ENCODE measurements at regions of chr7 and their contacts with region 1.

Region 1: GRCh38 chr7:26398756-26399501 is 107.3 kb downstream of the SNX10 start:
- DNase-seq: peak; percentile 2
- ATAC-seq: peak; percentile 70
- H3K4me3 ChIP-seq: peak overlapping the region; percentile 36
- H3K27ac ChIP-seq: no peak overlapping the region
- H3K4me1 ChIP-seq: peaks cover 2% of the 10 kb centered on the region; the same call in 1 of the 2 replicates
- H3K27me3 ChIP-seq: peaks cover 23% of the 10 kb centered on the region
- CTCF ChIP-seq: no peak
- POLR2A ChIP-seq: no peak
- RAD21 ChIP-seq: no peak

Region 2: GRCh38 chr7:24622646-24623182 is 1776.2 kb before region 1 on chr7:
- CTCF ChIA-PET with region 1: no interaction called
- POLR2A ChIA-PET with region 1: interaction called, 17 read pairs
- dilution Hi-C with region 1: no loop called
- in situ Hi-C with region 1: no loop called
- intact Hi-C with region 1: no loop called
- DNase-seq: no peak
- ATAC-seq: no peak
- H3K4me3 ChIP-seq: no peak overlapping the region
- H3K27ac ChIP-seq: no peak overlapping the region
- H3K4me1 ChIP-seq: no peaks in the 10 kb centered on the region
- H3K27me3 ChIP-seq: no peaks in the 10 kb centered on the region
- CTCF ChIP-seq: no peak
- POLR2A ChIP-seq: no peak
- RAD21 ChIP-seq: no peak

Region 3: GRCh38 chr7:26423437-26423836 is 24.5 kb after region 1 on chr7:
- CTCF ChIA-PET with region 1: no interaction called
- POLR2A ChIA-PET with region 1: no interaction called
- dilution Hi-C with region 1: no loop called
- in situ Hi-C with region 1: no loop called
- intact Hi-C with region 1: no loop called
- DNase-seq: no peak
- ATAC-seq: no peak
- H3K4me3 ChIP-seq: no peak overlapping the region
- H3K27ac ChIP-seq: no peak overlapping the region
- H3K4me1 ChIP-seq: no peaks in the 10 kb centered on the region
- H3K27me3 ChIP-seq: no peaks in the 10 kb centered on the region
- CTCF ChIP-seq: no peak
- POLR2A ChIP-seq: no peak
- RAD21 ChIP-seq: no peak

Measured in IMR-90 (cell line).